ENCODE measurements at regions of chr3 and their contacts with region 1.

Region 1: DNA sequence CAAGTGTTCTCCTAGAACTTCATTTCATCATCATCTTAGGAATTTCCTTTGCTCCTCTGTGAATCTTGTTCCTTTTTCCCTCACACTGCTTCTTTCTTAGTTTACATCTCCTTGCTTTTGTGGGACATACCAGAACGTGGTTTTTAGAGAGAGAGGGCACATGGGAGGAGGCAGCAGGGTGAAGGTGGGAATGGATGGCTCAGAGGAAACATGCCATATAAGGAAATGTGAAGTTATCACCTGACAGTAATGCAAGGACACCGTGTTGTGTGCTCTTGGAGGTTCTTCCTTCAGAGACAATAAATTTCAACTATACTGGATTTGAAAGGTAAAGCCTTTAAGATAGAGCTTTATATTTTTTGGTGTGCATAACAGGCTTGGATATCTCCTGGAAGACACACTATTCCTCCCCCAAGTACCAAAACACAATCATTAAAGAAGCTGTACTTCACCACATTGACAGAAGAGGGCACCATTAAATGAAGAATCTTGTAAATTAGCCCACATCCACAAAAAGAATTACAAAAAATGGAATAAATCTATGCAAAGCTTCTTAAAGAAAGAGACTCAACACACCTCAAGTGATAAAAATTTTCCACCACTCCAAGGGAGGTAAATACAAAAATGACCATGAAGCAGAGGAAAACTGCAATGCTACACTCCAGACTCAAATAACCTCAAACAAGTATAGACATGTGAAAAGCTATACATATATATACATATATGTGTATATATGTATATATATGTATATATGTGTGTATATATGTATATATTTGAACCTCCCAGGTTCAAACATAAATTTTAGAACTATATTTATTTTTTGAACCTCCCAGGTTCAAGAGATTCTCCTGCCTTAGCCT is 26.1 kb downstream of the RPL39L start:
- DNase-seq: no peak
- ATAC-seq: peak; percentile 86
- H3K4me3 Mint-ChIP-seq: no peak overlapping the region
- H3K27ac Mint-ChIP-seq: no peak overlapping the region
- H3K4me1 Mint-ChIP-seq: peaks cover 7% of the 10 kb centered on the region
- H3K27me3 Mint-ChIP-seq: no peaks in the 10 kb centered on the region
- CTCF ChIP-seq: peak; percentile 16

Region 2: DNA sequence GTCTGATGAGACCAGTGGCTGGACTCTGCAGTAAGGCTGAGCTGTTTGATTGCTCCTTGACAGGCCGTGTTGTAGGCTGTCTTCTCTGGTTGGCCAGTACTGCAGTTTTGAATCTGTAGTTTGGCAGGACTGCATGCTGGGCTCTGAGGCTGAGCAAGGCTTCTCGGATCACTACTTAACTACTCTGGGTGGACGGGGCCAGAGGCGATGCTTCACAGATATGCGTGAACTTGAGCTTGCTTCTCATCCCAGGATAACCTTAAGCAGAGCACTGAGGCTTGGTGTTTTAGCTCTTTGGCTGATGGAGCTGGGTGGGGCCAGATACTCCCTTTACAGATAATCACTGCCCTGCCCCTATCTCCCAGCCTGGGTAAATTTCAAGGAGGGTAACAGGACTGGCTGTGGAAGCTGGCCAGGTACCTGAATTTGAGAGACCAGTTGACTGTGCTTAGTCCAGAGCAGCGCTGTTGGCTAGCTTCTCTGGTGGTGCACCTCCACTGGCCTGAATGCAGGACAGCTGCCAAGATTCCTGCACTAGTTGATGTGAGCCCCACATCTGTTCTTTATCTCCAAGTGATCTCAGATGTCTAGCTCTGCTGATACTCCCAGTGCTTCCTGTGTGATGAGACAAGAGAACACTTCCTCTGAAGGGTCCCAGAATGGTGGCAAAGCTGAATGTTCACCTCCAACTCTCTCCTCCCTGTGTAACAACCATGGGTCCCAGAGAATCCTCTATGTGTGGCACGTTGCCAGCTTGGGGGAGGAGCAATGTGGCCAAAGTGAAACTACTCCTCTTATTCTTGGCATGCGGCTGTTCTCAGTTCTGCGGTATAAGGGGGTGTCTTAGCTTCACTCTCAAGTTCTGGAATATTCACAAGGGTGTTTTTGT is 11.7 kb before region 1 on chr3:
- CTCF ChIA-PET with region 1: interaction called, 27 read pairs
- POLR2A ChIA-PET with region 1: interaction called, 3 read pairs
- DNase-seq: no peak
- ATAC-seq: peak; percentile 74
- H3K4me3 Mint-ChIP-seq: no peak overlapping the region
- H3K27ac Mint-ChIP-seq: no peak overlapping the region
- H3K4me1 Mint-ChIP-seq: peaks cover 16% of the 10 kb centered on the region
- H3K27me3 Mint-ChIP-seq: no peaks in the 10 kb centered on the region
- CTCF ChIP-seq: no peak

Region 3: DNA sequence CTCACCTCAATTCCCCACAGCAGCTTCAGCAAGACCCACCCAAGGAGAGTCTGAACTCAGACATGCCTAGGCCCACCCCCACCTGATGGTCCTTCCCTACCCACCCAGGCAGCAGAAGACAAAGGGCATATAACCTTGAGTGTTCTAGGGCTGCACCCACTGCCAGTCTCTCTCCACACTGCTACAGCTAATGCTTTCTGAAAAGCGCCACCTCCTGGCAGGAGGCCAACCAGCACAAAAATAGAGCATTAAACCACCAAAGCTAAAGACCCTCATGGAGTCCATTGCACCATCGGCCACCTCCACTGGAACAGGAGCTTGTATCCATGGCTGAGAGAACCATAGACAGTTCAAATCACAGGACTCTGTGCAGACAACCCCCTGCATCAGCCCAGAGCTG is 37.4 kb after region 1 on chr3:
- CTCF ChIA-PET with region 1: interaction called, 19 read pairs
- POLR2A ChIA-PET with region 1: no interaction called
- DNase-seq: peak; percentile 57
- ATAC-seq: peak; percentile 64
- H3K4me3 Mint-ChIP-seq: no peak overlapping the region
- H3K27ac Mint-ChIP-seq: peak overlapping the region; percentile 91
- H3K4me1 Mint-ChIP-seq: peaks cover 39% of the 10 kb centered on the region
- H3K27me3 Mint-ChIP-seq: no peaks in the 10 kb centered on the region
- CTCF ChIP-seq: no peak; the same call in 1 of the 2 replicates

Measured in WTC11 (cell line).